PC-3 (cell line): ENCODE measurements at regions of chr17 and their contacts with region 1.

Region 1: DNA sequence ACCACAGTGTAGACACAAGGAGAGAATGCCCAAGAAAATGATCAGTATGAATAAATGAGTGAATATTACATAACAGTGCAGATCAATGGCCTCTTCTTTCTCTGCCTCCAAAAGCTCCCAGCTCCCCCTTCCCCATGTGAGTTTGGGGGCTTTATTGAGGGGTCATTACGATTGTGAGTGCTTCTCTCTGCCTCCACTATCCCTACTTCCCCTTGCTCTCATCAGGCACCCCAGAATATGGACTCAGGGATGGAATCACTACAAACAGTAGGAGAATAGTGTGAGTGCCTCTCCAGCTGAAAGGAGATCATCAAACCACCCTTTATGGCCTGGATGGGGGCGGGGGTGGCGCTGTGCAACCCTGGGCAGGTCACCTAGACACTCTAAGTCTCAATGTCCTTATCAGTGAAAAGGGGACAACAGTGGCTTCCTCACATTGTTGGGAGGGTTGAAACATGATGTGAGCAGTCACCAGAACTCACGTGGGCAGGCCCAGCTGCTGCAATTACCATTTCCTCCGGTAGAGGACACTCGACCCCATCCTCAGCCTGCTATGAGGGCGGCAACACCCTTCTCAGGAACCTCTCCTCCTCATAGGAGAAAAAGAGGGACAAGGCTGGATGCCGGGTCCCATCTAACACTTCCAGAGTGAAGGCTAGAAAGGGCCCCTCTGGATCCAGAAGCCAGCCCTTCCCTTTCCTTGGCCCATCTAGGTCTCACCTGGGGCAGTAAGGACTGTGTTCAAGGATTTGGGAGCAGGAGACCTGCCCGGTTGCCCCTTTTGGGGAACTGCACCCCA is 2.1 kb upstream of the EPOP start:
- DNase-seq: peak; percentile 81
- ATAC-seq: peak; percentile 66
- H3K4me3 ChIP-seq: no peak overlapping the region
- H3K27ac ChIP-seq: no peak overlapping the region
- H3K4me1 ChIP-seq: peaks cover 12% of the 10 kb centered on the region; the same call in 1 of the 2 replicates
- H3K27me3 ChIP-seq: no peaks in the 10 kb centered on the region
- CTCF ChIP-seq: peak; percentile 80

Region 2: GRCh38 chr17:38735161-38735997 is 58.5 kb after region 1 on chr17:
- CTCF ChIA-PET with region 1: no interaction called
- POLR2A ChIA-PET with region 1: no interaction called
- intact Hi-C with region 1: loop called (anchors 2 kb)
- DNase-seq: peak; percentile 21
- ATAC-seq: no peak; the same call in 1 of the 2 replicates
- H3K4me3 ChIP-seq: no peak overlapping the region
- H3K27ac ChIP-seq: no peak overlapping the region
- H3K4me1 ChIP-seq: peaks cover 14% of the 10 kb centered on the region; the same call in 1 of the 2 replicates
- H3K27me3 ChIP-seq: no peaks in the 10 kb centered on the region
- CTCF ChIP-seq: peak; percentile 78

Region 3: DNA sequence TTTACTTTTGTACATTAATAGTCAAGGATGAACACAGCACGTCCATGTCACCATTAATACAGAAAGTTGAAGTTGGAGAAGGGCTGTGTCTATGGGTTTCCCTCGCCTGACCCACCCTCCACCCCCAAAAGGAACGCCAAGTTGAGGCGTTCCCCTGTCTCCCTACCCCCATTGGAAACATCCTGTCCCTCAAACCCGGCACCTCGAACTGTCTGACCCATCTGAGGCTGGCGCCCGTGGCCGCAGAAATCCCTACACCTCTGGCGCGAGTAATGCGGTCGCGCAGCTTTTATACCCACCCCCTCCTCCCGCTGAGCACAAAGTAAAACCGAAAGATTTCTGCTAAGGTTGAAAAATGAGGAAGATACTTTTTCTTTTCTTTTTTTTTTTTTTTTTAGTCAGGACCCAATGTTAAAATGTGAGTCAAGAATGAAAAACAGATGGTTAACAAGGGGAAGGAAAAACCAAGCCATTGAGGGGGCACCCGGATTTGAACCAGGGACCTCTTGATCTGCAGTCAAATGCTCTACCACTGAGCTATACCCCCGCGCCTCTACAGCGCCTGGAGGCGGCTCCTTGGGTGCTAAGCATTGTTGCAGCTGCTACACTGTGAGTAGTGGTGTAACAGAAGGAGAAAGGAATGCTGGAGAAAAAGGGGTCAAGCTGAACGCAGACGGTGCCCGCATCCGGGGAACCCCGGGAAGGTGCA is 192.1 kb after region 1 on chr17:
- CTCF ChIA-PET with region 1: no interaction called
- POLR2A ChIA-PET with region 1: no interaction called
- intact Hi-C with region 1: no loop called
- DNase-seq: peak; percentile 87
- ATAC-seq: peak; percentile 59
- H3K4me3 ChIP-seq: peak overlapping the region; percentile 98
- H3K27ac ChIP-seq: 0 out of 2 replicates have a peak overlapping the region, but pooled peaks have one; percentile 11
- H3K4me1 ChIP-seq: peaks cover 23% of the 10 kb centered on the region
- H3K27me3 ChIP-seq: no peaks in the 10 kb centered on the region
- CTCF ChIP-seq: peak; percentile 47